Heart right ventricle (tissue), 16 donors: ENCODE measurements at regions of chrX and their contacts with region 1.

Region 1: DNA sequence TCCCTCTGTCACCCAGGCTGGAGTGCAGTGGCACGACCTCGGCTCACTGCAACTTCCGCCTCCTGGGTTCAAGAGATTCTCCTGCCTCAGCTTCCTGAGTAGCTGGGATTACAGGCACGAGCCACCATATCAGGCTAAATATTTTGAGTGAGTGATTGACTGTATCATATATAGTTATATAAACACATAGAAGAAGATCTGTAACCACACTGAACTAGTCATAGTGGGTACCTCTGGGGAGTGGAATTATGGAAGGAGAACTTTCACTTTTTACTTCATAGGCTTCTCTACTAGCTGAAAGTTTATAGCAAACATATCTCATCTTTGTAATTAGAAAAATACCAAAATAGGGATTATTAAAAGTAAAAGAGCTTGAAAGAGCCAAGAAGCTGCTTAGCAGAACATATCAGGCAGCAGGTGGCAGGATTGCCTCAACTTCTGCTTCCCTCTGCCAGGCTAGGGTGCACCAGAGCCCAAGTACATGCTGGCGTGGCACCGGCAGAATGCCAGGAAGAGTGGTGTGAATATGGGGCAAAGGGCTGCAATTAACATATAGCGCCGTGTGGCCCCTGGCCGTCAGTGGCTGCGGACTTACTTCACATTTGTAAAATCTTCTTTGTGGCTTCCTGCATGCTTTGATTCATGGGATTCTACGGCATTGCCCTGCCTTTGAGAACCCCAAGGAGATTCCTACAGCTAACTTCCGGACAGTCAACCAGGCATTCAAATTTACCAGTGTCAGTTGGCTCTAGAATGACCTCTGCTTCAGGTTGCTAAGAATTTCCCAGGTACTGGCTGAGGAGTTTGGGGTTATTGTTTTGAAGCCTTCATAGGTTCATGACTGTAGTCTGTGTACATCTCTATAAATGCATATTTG is 39.4 kb upstream of the CD40LG start:
- DNase-seq: peak; percentile 8 to 38
- ATAC-seq: peak in 1 of 8 donors; percentile 50
- H3K4me3 ChIP-seq: no peak overlapping the region
- H3K27ac ChIP-seq: no peak overlapping the region
- H3K4me1 ChIP-seq: no peaks in the 10 kb centered on the region
- H3K27me3 ChIP-seq: peaks cover 0 to 21% (median 0%) of the 10 kb centered on the region in 7 donors
- CTCF ChIP-seq: peak in 7 of 9 donors; percentile 7 to 50 (median 35)

Region 2: DNA sequence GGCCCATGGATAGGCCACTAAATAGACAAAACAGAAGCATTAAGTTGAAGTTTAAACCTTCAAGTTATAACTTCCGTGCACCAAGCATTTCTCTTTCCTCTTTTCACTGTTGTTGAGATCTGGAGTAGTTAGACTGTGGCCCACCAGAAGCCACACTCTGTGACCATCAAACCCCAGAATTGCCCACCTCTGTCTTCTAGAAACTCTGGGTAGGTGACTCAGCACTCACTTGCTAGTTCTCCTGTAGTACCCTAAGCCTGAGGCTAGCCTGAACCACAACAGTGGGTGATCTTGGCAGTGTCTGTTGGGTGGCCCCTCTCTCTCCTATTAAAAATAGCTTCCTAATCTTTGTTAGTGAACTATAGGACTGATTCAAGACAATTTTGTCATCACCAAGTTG is 14.9 kb after region 1 on chrX:
- intact Hi-C with region 1: loop called in 1 of 10 experiments (anchors 1 kb)
- DNase-seq: no peak
- ATAC-seq: no peak
- H3K4me3 ChIP-seq: no peak overlapping the region
- H3K27ac ChIP-seq: no peak overlapping the region
- H3K4me1 ChIP-seq: no peaks in the 10 kb centered on the region
- H3K27me3 ChIP-seq: peaks cover 0 to 4% (median 0%) of the 10 kb centered on the region in 7 donors
- CTCF ChIP-seq: no peak

Region 3: GRCh38 chrX:136694431-136695087 is 86.0 kb after region 1 on chrX:
- intact Hi-C with region 1: loop called in 1 of 10 experiments (anchors 10 kb)
- DNase-seq: no peak
- ATAC-seq: peak in 1 of 8 donors; percentile 28
- H3K4me3 ChIP-seq: no peak overlapping the region
- H3K27ac ChIP-seq: peak overlapping the region in 1 of 10 donors; percentile 27
- H3K4me1 ChIP-seq: no peaks in the 10 kb centered on the region
- H3K27me3 ChIP-seq: peaks cover 0 to 21% (median 0%) of the 10 kb centered on the region in 7 donors
- CTCF ChIP-seq: peak; percentile 8 to 63 (median 49)

Region 4: DNA sequence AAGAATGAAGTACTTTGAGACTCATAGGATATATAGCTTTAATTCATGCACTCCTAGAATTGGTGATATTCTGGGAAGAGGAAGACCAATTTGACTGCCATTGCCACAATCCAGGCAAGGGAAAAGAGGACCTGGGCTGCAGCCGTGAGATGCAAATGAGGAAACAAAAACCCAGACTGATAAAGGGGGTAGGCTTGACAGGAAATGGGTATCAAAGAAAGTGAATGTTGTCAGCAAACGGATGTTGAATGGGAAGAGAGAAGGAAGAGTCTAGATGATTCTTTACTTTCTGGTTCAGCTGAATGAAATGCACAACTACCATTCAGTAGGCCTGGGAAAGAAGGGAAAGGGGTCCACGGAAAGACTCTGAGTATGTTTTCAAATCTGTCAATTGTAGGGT is 189.3 kb after region 1 on chrX:
- intact Hi-C with region 1: no loop called
- DNase-seq: no peak
- ATAC-seq: no peak
- H3K4me3 ChIP-seq: no peak overlapping the region
- H3K27ac ChIP-seq: no peak overlapping the region
- H3K4me1 ChIP-seq: no peaks in the 10 kb centered on the region
- H3K27me3 ChIP-seq: no peaks in the 10 kb centered on the region
- CTCF ChIP-seq: no peak

Region 5: GRCh38 chrX:136920001-136920400 is 311.5 kb after region 1 on chrX:
- intact Hi-C with region 1: loop called in 1 of 10 experiments (anchors 5 kb)
- DNase-seq: no peak
- ATAC-seq: peak in 3 of 8 donors; percentile 42 to 68 (median 47)
- H3K4me3 ChIP-seq: no peak overlapping the region
- H3K27ac ChIP-seq: no peak overlapping the region
- H3K4me1 ChIP-seq: peaks cover 0 to 4% (median 0%) of the 10 kb centered on the region in 9 donors
- H3K27me3 ChIP-seq: no peaks in the 10 kb centered on the region
- CTCF ChIP-seq: no peak